Activated CD4-positive, alpha-beta T cell treated with anti-CD3 and anti-CD28 coated beads, Interleukin-2, amount 10 ng/mL, durations not matched to agents 24 days and 14 days (primary cell): ENCODE measurements at regions of chr17 and their contacts with region 1.

Region 1: DNA sequence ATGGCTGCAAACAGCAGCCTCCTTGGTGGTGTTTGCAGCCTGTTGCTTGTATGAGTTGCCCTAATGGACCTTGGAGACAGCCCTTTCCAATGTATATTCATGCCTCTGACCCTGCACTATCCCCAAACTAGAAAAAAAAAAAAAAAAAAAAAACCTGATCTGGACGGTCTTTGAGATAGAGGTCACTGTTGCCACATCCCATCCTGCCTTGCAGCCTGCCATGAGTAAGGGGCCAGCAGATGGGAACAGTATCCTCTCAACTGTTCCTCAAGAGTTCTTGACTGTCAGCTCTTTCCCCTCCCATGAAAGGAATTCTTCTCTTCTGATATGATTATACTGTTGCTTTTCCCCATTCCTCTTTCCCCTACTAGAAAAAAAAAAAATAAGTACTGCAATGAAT is 152.4 kb downstream of the SSH2 start:
- DNase-seq: no peak
- H3K4me3 Mint-ChIP-seq: no peak overlapping the region
- H3K27ac Mint-ChIP-seq: no peak overlapping the region
- H3K4me1 Mint-ChIP-seq: peaks cover 5% of the 10 kb centered on the region
- H3K27me3 Mint-ChIP-seq: no peaks in the 10 kb centered on the region

Region 2: GRCh38 chr17:29579866-29580771 is 197.5 kb before region 1 on chr17:
- intact Hi-C with region 1: loop called (anchors 5 kb)
- DNase-seq: peak; percentile 96
- H3K4me3 Mint-ChIP-seq: no peak overlapping the region
- H3K27ac Mint-ChIP-seq: peak overlapping the region; percentile 82
- H3K4me1 Mint-ChIP-seq: peaks cover 13% of the 10 kb centered on the region
- H3K27me3 Mint-ChIP-seq: no peaks in the 10 kb centered on the region

Region 3: DNA sequence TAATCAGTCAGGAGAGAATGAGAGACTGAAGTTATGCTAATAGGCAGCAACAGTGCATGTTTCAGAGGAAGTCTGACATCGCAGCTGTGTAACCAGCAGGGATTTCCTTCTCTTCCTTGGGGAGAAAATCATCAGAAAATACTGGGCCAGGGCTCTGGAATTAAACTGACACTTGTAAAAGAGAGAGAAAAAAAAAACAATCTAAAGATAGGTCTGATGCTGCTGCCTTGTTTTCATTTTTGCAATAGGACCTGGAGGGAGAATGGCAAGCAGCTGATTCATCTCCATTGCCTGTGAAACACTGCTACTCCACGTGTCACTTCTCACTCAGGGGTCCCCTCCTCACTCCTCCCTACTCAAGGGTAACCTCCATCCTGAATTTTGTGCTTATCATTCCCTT is 137.2 kb before region 1 on chr17:
- intact Hi-C with region 1: loop called (anchors 1 kb)
- DNase-seq: no peak
- H3K4me3 Mint-ChIP-seq: no peak overlapping the region
- H3K27ac Mint-ChIP-seq: peak overlapping the region; percentile 70
- H3K4me1 Mint-ChIP-seq: peaks cover 17% of the 10 kb centered on the region
- H3K27me3 Mint-ChIP-seq: no peaks in the 10 kb centered on the region